ENCODE measurements at regions of chr1 and their contacts with region 1.

Region 1: DNA sequence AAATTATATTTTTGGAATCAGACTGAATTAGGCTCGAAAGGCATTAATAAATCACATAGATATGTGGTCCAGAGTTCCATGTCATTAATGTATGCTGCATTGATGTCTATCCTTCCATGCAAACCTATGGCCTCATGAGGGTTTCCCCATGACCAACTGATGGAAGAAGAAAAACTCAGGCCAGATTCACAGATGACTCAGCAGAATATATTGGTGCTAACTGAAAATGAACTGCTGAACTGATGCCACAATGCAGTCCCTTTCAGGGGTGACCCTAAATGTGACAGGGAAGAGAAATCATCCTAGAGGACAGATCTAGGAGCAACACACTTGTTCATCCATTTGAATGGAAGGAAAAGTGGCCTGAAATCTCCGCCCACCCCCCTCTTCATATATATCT is 110.5 kb upstream of the KCND3 start:
- DNase-seq: no peak
- H3K4me3 Mint-ChIP-seq: no peak overlapping the region
- H3K27ac Mint-ChIP-seq: no peak overlapping the region
- H3K4me1 Mint-ChIP-seq: no peaks in the 10 kb centered on the region
- H3K27me3 Mint-ChIP-seq: no peaks in the 10 kb centered on the region

Region 2: GRCh38 chr1:111672331-111672730 is 427.6 kb before region 1 on chr1:
- CTCF ChIA-PET with region 1: no interaction called
- POLR2A ChIA-PET with region 1: interaction called, 13 read pairs
- DNase-seq: no peak
- H3K4me3 Mint-ChIP-seq: no peak overlapping the region
- H3K27ac Mint-ChIP-seq: no peak overlapping the region
- H3K4me1 Mint-ChIP-seq: peaks cover 55% of the 10 kb centered on the region
- H3K27me3 Mint-ChIP-seq: no peaks in the 10 kb centered on the region

Region 3: GRCh38 chr1:112083487-112083886 is 16.5 kb before region 1 on chr1:
- CTCF ChIA-PET with region 1: no interaction called
- POLR2A ChIA-PET with region 1: no interaction called
- DNase-seq: no peak
- H3K4me3 Mint-ChIP-seq: no peak overlapping the region
- H3K27ac Mint-ChIP-seq: no peak overlapping the region
- H3K4me1 Mint-ChIP-seq: no peaks in the 10 kb centered on the region
- H3K27me3 Mint-ChIP-seq: peaks cover 12% of the 10 kb centered on the region